SK-N-SH (cell line): ENCODE measurements at regions of chr7 and their contacts with region 1.

Region 1: GRCh38 chr7:12389089-12389700 is 14.5 kb downstream of the VWDE start:
- DNase-seq: peak; percentile 65
- H3K4me3 ChIP-seq: no peak overlapping the region; a peak in 1 of 4 replicates
- H3K27ac ChIP-seq: no peak overlapping the region; a peak in 1 of 4 replicates
- H3K4me1 ChIP-seq: peaks cover 0 to 8% of the 10 kb centered on the region in 2 experiments; a peak in 2 of 4 replicates
- H3K27me3 ChIP-seq: no peaks in the 10 kb centered on the region
- CTCF ChIP-seq: peak; percentile 97
- EP300 ChIP-seq: no peak
- RAD21 ChIP-seq: peak; percentile 75

Region 2: GRCh38 chr7:12378389-12378788 is 10.8 kb before region 1 on chr7:
- CTCF ChIA-PET with region 1: interaction called, 20 read pairs
- POLR2A ChIA-PET with region 1: no interaction called
- DNase-seq: no peak
- H3K4me3 ChIP-seq: no peak overlapping the region
- H3K27ac ChIP-seq: no peak overlapping the region
- H3K4me1 ChIP-seq: no peaks in the 10 kb centered on the region
- H3K27me3 ChIP-seq: no peaks in the 10 kb centered on the region
- CTCF ChIP-seq: no peak
- EP300 ChIP-seq: no peak
- RAD21 ChIP-seq: no peak

Region 3: DNA sequence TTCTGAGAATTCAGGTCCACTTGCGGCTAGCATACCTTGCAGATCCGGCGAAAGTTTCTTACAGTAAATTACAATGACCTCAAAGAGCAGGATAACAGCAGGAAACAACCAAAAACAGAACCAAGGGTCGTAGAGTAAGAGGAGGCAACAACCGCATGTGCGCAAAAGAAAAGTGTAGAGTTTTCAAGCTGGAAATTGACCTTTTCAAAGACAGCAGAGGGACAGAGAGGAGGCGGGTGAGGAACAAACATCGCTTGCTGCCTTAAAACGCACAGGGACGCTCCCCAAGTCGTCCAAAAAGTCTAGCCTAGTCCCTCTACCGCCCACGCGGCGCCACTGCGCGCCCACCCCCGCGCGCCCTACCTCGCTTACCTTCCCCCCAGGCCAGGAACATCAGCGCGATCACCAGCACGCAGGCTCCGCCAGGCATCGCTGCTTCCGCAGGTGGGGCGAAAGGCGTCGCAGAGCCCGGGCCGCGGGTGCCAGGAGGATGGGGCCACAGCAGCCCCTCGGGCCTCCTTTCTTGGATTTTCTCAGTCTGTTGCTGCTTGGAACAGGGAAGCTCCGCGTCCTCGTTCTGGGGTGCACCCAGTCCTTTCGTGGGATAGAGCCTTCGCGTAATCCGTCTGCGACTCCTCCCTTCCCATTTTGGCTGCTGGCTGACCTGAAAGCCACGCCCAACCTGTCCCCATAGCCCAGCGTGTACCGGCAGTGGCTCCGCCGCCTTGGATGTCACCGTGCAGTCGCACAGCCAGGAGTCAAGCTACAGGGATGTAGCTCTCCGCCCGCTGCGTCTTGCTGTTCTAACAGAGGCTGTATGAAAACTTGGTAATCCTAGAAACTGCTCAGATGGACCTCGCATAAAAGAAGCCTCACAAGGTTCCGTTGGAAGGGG is 14.3 kb after region 1 on chr7 and contains the start of gene VWDE:
- CTCF ChIA-PET with region 1: interaction called, 13 read pairs
- POLR2A ChIA-PET with region 1: no interaction called
- DNase-seq: peak; percentile 80
- H3K4me3 ChIP-seq: peak within 1 kb of the TSS; percentile 59 to 62
- H3K27ac ChIP-seq: peak within 1 kb of the TSS in 1 of 2 experiments; percentile 32; a peak in 1 of 4 replicates
- H3K4me1 ChIP-seq: peaks cover 0 to 8% of the 10 kb centered on the region in 2 experiments; a peak in 2 of 4 replicates
- H3K27me3 ChIP-seq: peaks cover 9% of the 10 kb centered on the region; the same call in 1 of the 2 replicates
- CTCF ChIP-seq: no peak
- EP300 ChIP-seq: no peak
- RAD21 ChIP-seq: no peak
- polyA plus RNA-seq, gene VWDE: 0.03 TPM in 1 of 2 replicates, not detected in the other

Region 4: DNA sequence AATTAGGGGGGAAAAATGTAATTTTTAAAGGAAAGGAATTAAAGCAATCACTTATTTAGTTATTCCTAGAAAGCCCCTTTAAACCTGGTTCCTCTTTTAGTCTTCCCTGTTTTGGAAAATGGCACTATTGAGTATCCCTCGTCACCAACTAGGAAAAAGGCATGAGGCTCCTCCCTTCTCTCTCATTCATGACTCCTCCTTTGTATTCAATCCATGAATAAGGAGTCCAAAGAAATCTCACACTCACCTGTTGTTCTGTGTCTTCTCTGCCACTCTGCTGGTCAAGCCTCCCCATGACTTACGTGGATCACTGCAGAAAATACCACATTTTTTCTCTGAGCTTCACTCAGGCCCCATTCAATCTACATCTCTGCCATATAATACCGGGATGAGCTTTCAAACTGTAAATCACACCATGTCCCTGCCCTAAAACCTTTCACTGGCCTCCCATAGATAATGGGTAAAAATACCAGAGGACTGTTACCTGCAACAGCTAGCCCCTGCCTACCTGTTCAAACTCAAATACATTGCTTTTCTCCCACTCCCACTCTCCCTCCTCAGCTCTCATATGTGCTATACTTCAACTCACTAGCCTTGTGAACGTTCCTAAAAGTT is 20.0 kb after region 1 on chr7:
- CTCF ChIA-PET with region 1: interaction called, 13 read pairs
- POLR2A ChIA-PET with region 1: no interaction called
- DNase-seq: no peak
- H3K4me3 ChIP-seq: no peak overlapping the region
- H3K27ac ChIP-seq: no peak overlapping the region
- H3K4me1 ChIP-seq: peaks cover 0 to under 1% of the 10 kb centered on the region in 2 experiments; a peak in 1 of 4 replicates
- H3K27me3 ChIP-seq: peaks cover 4% of the 10 kb centered on the region; the same call in 1 of the 2 replicates
- CTCF ChIP-seq: no peak
- EP300 ChIP-seq: no peak
- RAD21 ChIP-seq: no peak